Body of pancreas (tissue), 4 donors: ENCODE measurements at regions of chr3 and their contacts with region 1.

Region 1: GRCh38 chr3:124351430-124352148 is 359.7 kb upstream of the ROPN1 start:
- DNase-seq: peak in 3 of 4 donors; percentile 13 to 50 (median 32)
- ATAC-seq: peak; percentile 90
- H3K4me3 ChIP-seq: no peak overlapping the region
- H3K27ac ChIP-seq: peak overlapping the region in 2 of 4 donors; percentile 23 to 32
- H3K4me1 ChIP-seq: peaks cover 9% of the 10 kb centered on the region
- H3K27me3 ChIP-seq: no peaks in the 10 kb centered on the region
- CTCF ChIP-seq: peak; percentile 9 to 74 (median 62)
- POLR2A ChIP-seq: no peak

Region 2: GRCh38 chr3:124467980-124468902 is 116.7 kb after region 1 on chr3:
- intact Hi-C with region 1: loop called (anchors 10 kb)
- DNase-seq: peak; percentile 31 to 54 (median 48)
- ATAC-seq: peak; percentile 75
- H3K4me3 ChIP-seq: no peak overlapping the region
- H3K27ac ChIP-seq: no peak overlapping the region
- H3K4me1 ChIP-seq: no peaks in the 10 kb centered on the region
- H3K27me3 ChIP-seq: no peaks in the 10 kb centered on the region
- CTCF ChIP-seq: peak; percentile 66 to 88 (median 85)
- POLR2A ChIP-seq: no peak

Region 3: DNA sequence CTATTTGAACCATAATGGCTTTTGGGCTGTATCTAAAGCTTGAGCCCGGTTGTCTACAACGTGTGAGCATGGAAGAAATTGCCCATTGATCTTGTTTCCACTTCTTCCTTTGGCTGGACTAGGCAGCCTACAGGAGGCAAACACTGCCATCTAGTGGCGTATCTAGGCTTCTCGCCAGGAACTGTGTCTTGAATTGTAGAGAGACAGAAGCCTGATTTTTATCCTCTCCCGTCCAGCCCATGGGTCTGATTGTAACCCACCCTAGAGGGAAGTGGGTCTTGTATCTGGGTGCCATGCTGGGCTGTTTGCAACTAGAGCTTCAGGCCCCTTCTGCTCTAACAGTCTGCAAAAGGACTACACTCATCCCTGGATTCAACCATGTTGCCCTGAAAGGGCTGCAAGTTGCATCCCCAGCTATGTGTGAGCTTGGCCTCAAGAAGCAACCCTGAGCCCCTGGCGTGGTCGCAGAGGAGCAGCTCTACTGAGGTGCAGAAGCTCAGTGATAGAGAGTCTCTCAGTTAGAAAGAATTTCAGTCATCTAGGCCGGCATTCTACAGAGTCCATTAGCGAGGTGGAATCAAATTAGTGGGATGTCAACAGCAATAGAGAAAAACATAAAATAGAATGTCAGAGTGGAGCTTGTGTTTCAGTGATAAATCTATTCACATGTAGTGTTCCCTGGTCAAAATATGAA is 208.4 kb after region 1 on chr3:
- intact Hi-C with region 1: loop called (anchors 10 kb)
- DNase-seq: peak; percentile 80 to 85 (median 81)
- ATAC-seq: peak; percentile 79
- H3K4me3 ChIP-seq: no peak overlapping the region
- H3K27ac ChIP-seq: peak overlapping the region in 2 of 4 donors; percentile 14 to 41
- H3K4me1 ChIP-seq: peaks cover 37% of the 10 kb centered on the region
- H3K27me3 ChIP-seq: no peaks in the 10 kb centered on the region
- CTCF ChIP-seq: peak; percentile 78 to 92 (median 84)
- POLR2A ChIP-seq: no peak